Aorta (tissue), 5 donors: ENCODE measurements at regions of chr12 and their contacts with region 1.

Region 1: GRCh38 chr12:63843721-63844390 is 644 bp upstream of the SRGAP1 start:
- DNase-seq: peak; percentile 94 to 96
- ATAC-seq: peak; percentile 95
- H3K4me3 ChIP-seq: peak overlapping the region; percentile 60 to 84
- H3K27ac ChIP-seq: peak overlapping the region; percentile 57 to 73
- H3K4me1 ChIP-seq: no peaks in the 10 kb centered on the region
- H3K27me3 ChIP-seq: no peaks in the 10 kb centered on the region

Region 2: GRCh38 chr12:63826006-63826585 is 17.8 kb before region 1 on chr12:
- intact Hi-C with region 1: no loop called
- DNase-seq: no peak
- ATAC-seq: peak; percentile 69
- H3K4me3 ChIP-seq: no peak overlapping the region
- H3K27ac ChIP-seq: no peak overlapping the region
- H3K4me1 ChIP-seq: no peaks in the 10 kb centered on the region
- H3K27me3 ChIP-seq: no peaks in the 10 kb centered on the region

Region 3: GRCh38 chr12:64088431-64089349 is 244.8 kb after region 1 on chr12:
- intact Hi-C with region 1: loop called in 1 of 2 experiments (anchors 10 kb)
- DNase-seq: peak in 1 of 2 donors; percentile 70
- ATAC-seq: peak; percentile 90
- H3K4me3 ChIP-seq: no peak overlapping the region
- H3K27ac ChIP-seq: peak overlapping the region in 1 of 2 donors; percentile 56
- H3K4me1 ChIP-seq: peaks cover 3 to 6% of the 10 kb centered on the region in 2 donors
- H3K27me3 ChIP-seq: no peaks in the 10 kb centered on the region

Region 4: GRCh38 chr12:64222009-64222765 is 378.3 kb after region 1 on chr12 and contains the start of gene KICS2:
- intact Hi-C with region 1: loop called (anchors 1 to 10 kb)
- DNase-seq: peak; percentile 96 to 97
- ATAC-seq: peak; percentile 100
- H3K4me3 ChIP-seq: peak within 1 kb of the TSS; percentile 80 to 89
- H3K27ac ChIP-seq: peak within 1 kb of the TSS; percentile 65 to 91
- H3K4me1 ChIP-seq: peaks cover 0 to 2% of the 10 kb centered on the region in 2 donors
- H3K27me3 ChIP-seq: no peaks in the 10 kb centered on the region
- total RNA-seq, gene KICS2: 5.6 to 6.2 TPM

Region 5: GRCh38 chr12:64256166-64256800 is 412.4 kb after region 1 on chr12:
- intact Hi-C with region 1: loop called (anchors 2 kb)
- DNase-seq: no peak
- ATAC-seq: no peak
- H3K4me3 ChIP-seq: no peak overlapping the region
- H3K27ac ChIP-seq: no peak overlapping the region
- H3K4me1 ChIP-seq: no peaks in the 10 kb centered on the region
- H3K27me3 ChIP-seq: no peaks in the 10 kb centered on the region